Lower leg skin (tissue), 4 donors: ENCODE measurements at regions of chr15 and their contacts with region 1.

Region 1: DNA sequence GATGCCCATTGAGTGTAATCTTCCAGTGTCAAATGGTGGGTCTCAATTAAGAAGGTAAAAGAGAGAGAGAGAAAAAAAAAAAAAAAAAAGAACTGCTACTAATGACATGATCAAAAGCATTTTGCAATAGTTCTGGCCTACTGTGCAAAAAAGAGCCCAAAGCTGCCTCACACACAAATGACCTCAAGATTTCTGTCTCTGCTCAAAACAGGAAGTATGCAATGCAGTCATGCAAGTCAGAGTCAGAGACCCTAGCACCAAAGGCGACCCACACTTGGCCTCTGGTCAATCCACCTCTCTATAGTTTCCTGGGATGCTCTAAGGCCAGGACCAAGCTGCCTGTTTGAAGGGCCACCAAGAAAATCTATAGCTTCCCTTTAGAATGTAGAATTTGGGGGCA is 323.5 kb downstream of the VPS13C start:
- DNase-seq: no peak
- H3K4me3 ChIP-seq: no peak overlapping the region
- CTCF ChIP-seq: no peak
- POLR2A ChIP-seq: no peak

Region 2: GRCh38 chr15:61752001-61752400 is 15.2 kb after region 1 on chr15:
- intact Hi-C with region 1: loop called (anchors 1 kb)
- DNase-seq: no peak
- H3K4me3 ChIP-seq: no peak overlapping the region
- CTCF ChIP-seq: no peak
- POLR2A ChIP-seq: no peak